Calu3 (cell line): ENCODE measurements at regions of chr1 and their contacts with region 1.

Region 1: DNA sequence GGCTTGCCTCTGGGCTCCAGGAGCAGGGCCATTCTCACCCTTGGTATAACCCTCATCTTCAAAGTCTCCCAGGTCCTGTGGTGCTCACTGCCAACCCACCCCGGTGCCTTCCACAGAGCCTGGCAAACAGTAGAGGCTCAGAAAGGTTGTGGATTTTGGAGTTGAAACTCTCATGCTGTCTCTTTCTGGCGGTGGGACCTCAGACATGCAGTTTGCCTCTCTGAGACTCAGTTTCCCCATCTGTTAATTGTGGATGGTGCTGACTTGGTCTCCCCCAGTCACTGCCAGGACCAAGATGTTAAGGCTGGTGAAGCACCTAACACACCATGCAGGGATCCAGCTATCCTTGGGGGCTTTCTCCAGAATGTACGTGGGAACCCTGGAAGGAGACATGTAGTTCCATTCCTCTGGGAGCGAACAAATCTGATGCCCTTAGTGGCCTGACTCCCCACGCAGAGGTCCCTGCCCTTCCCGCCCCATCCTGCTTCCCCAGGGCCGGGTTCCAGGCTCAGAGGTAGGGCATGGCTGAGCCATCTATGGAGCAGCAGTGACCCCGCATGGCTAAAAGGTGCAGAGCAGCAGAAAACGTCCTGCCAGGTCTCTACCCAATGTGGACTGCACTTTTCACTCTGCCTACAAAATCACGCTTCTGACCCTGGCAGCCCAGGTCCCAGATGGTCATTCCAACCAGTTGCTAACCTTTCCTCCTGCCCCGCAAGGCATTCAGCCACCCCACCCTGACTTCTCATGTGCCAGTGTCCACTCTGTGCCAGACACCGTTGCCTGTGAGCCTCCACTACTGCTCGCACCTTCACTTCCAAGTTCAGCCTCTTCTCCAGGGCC is 9.2 kb upstream of the TTC22 start:
- DNase-seq: peak; percentile 79
- H3K4me3 Mint-ChIP-seq: no peak overlapping the region
- H3K27ac Mint-ChIP-seq: no peak overlapping the region
- H3K4me1 Mint-ChIP-seq: peaks cover 16% of the 10 kb centered on the region
- H3K27me3 Mint-ChIP-seq: peaks cover 18% of the 10 kb centered on the region
- CTCF ChIP-seq: peak; percentile 94

Region 2: DNA sequence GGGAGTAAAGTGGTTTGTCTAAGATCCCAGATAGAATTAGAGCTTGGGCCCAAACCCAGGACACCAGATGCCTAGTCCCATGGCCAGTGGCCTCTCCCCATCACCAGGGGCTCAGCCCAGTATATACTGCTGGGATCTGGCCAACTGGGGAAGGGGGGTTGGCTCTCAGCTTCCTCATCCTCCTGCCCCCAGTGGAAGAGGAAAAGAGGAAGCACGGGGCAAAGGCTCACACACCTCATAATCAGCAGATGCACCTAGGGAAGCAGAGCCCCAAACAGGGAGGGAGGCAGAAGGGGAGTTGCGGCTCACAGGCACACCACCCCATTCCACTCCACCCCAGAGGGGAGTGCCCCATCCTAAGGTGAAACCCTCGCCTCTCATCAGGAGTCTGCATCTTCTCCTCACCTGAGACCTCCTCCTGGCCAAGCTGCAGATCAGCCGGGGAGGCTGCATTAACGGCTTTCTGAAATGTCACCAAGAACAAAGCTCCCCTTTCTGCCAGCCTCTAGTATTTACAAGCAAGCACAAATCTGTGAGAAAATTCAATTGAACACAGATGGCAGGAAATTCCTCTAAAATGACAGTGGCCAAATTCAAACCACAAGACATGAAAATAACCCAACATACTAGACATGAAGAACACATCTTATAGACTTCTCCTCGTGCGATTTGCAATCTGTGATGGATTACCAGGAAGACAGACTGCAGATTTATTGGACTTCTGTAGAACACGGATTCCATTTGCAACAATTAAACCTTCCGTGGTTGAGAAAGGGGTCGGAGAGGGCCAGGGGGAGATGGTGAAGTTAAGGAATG is 1154.2 kb before region 1 on chr1:
- CTCF ChIA-PET with region 1: no interaction called
- intact Hi-C with region 1: no loop called
- DNase-seq: no peak
- H3K4me3 Mint-ChIP-seq: no peak overlapping the region
- H3K27ac Mint-ChIP-seq: no peak overlapping the region
- H3K4me1 Mint-ChIP-seq: no peaks in the 10 kb centered on the region
- H3K27me3 Mint-ChIP-seq: peaks cover 87% of the 10 kb centered on the region
- CTCF ChIP-seq: no peak

Region 3: DNA sequence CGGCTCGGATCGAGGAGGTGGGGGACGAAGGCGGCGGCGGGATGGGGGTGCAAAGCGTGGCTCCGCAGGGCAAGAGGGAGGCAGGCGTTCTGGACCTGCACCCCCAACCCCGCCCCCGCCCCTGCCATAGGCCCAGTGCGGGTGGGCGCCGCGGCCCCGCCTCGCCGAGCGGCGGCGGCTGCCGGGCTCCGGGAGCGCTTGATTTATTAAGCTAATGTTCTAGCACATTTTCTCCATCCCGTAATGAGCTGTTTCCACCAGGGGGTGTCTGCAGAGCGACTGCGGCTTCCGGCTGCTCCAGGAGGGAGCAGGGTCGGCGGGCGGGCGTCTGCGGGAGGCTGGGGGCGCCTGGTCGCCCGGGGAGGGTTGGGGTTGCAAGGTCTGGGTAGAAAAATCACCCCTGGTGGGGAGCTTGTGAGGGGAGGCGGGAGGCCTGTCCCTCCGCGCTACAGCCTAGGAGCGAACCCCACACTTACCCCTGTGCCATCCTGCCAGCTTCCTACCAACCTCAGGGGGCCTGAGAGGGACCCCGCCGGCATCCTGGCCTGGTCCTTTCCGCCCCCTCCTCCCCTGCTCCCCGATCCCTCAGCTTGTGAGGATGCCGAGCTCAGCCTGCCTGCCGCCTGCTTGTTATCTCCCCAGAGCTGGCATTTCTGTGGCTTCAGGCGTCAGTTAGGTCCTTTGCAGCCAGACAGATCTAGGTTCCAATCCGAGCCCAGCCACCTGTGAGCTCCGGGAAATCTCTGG is 310.8 kb before region 1 on chr1:
- CTCF ChIA-PET with region 1: interaction called, 10 read pairs
- intact Hi-C with region 1: loop called (anchors 1 kb)
- DNase-seq: peak; percentile 66
- H3K4me3 Mint-ChIP-seq: peak overlapping the region; percentile 57
- H3K27ac Mint-ChIP-seq: no peak overlapping the region
- H3K4me1 Mint-ChIP-seq: peaks cover 17% of the 10 kb centered on the region
- H3K27me3 Mint-ChIP-seq: peaks cover 43% of the 10 kb centered on the region
- CTCF ChIP-seq: no peak

Region 4: GRCh38 chr1:54671985-54672608 is 138.2 kb before region 1 on chr1:
- CTCF ChIA-PET with region 1: interaction called, 3 read pairs
- intact Hi-C with region 1: loop called (anchors 1 kb)
- DNase-seq: peak; percentile 76
- H3K4me3 Mint-ChIP-seq: no peak overlapping the region
- H3K27ac Mint-ChIP-seq: no peak overlapping the region
- H3K4me1 Mint-ChIP-seq: no peaks in the 10 kb centered on the region
- H3K27me3 Mint-ChIP-seq: peaks cover 26% of the 10 kb centered on the region
- CTCF ChIP-seq: peak; percentile 93